ENCODE measurements at regions of chr2 and their contacts with region 1.

Region 1: GRCh38 chr2:31675485-31675901 is 94.8 kb upstream of the SRD5A2 start:
- DNase-seq: peak; percentile 57
- ATAC-seq: peak; percentile 96
- H3K4me3 Mint-ChIP-seq: no peak overlapping the region
- H3K27ac Mint-ChIP-seq: no peak overlapping the region
- H3K4me1 Mint-ChIP-seq: peaks cover 7% of the 10 kb centered on the region
- H3K27me3 Mint-ChIP-seq: peaks cover 6% of the 10 kb centered on the region; the same call in 1 of the 2 replicates
- CTCF ChIP-seq: no peak

Region 2: GRCh38 chr2:31694444-31694843 is 19.0 kb after region 1 on chr2:
- CTCF ChIA-PET with region 1: no interaction called
- POLR2A ChIA-PET with region 1: no interaction called
- DNase-seq: no peak
- ATAC-seq: peak; percentile 32; the same call in 1 of the 2 replicates
- H3K4me3 Mint-ChIP-seq: no peak overlapping the region
- H3K27ac Mint-ChIP-seq: no peak overlapping the region
- H3K4me1 Mint-ChIP-seq: no peaks in the 10 kb centered on the region
- H3K27me3 Mint-ChIP-seq: peaks cover 13% of the 10 kb centered on the region
- CTCF ChIP-seq: no peak

Region 3: DNA sequence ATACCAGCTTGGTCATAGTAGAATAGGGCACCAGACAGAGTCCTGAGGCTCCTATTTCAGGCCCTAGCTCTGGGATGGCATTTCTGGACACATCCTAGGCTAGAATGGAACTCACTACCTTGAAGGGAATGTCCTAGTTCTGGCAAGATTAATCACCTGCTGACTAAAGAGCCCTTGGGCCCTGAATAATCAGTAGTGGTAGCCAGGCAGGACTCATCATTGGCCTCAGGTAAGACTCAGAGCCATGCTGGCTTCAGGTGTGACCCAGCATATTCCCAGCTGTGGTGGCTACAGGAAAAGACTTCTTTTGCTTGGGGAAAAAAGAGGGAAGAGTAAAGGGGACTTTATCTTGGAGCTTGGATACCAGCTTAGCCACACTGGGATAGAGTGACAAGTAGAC is 36.2 kb after region 1 on chr2:
- CTCF ChIA-PET with region 1: no interaction called
- POLR2A ChIA-PET with region 1: no interaction called
- DNase-seq: no peak
- ATAC-seq: no peak
- H3K4me3 Mint-ChIP-seq: no peak overlapping the region
- H3K27ac Mint-ChIP-seq: no peak overlapping the region
- H3K4me1 Mint-ChIP-seq: no peaks in the 10 kb centered on the region
- H3K27me3 Mint-ChIP-seq: peaks cover 8% of the 10 kb centered on the region
- CTCF ChIP-seq: no peak

Region 4: GRCh38 chr2:31729764-31730092 is 54.2 kb after region 1 on chr2:
- CTCF ChIA-PET with region 1: interaction called, 19 read pairs
- POLR2A ChIA-PET with region 1: no interaction called
- DNase-seq: no peak
- ATAC-seq: peak; percentile 99
- H3K4me3 Mint-ChIP-seq: no peak overlapping the region
- H3K27ac Mint-ChIP-seq: no peak overlapping the region
- H3K4me1 Mint-ChIP-seq: peaks cover 4% of the 10 kb centered on the region
- H3K27me3 Mint-ChIP-seq: no peaks in the 10 kb centered on the region
- CTCF ChIP-seq: no peak

Region 5: DNA sequence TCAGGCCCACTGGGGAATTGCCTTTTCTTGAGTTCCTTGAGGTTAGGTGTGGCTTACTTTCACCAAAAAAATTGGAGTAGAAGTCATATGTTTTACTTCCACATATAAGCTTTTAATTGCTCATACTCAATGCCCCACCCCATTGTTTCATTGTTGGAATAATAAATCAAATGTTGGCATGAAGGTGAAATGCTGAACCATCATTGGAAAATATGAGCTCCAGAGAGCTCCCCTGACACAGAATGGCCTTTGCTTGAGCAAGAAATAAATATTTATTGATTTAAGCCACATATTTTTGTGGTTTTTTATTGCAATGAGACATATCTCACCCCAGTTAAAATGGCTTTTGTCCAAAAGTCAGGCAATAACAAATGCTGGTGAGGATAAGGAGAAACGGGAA is 72.5 kb after region 1 on chr2:
- CTCF ChIA-PET with region 1: no interaction called
- POLR2A ChIA-PET with region 1: no interaction called
- DNase-seq: no peak
- ATAC-seq: no peak
- H3K4me3 Mint-ChIP-seq: no peak overlapping the region
- H3K27ac Mint-ChIP-seq: no peak overlapping the region
- H3K4me1 Mint-ChIP-seq: no peaks in the 10 kb centered on the region
- H3K27me3 Mint-ChIP-seq: peaks cover 6% of the 10 kb centered on the region
- CTCF ChIP-seq: no peak

Region 6: DNA sequence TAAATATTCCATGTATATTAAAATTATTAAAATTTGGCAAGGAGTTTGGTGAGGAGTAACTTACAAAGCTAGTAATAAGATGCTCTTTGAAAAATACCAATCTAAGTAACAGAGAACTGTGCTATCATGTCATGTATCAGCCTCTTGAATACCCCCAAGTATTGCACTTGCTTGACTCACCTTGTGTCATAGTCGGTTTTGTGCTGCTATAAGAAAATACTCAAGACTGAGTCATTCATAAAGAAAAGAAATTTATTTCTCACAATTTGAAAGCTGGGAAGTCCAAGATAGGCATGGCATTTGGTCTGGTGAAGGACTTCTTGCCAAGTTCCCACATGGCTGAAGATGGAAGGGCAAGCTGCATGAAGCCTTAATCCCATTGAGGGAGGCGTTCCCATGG is 156.1 kb after region 1 on chr2:
- CTCF ChIA-PET with region 1: interaction called, 17 read pairs
- POLR2A ChIA-PET with region 1: no interaction called
- DNase-seq: no peak
- ATAC-seq: no peak
- H3K4me3 Mint-ChIP-seq: no peak overlapping the region
- H3K27ac Mint-ChIP-seq: no peak overlapping the region
- H3K4me1 Mint-ChIP-seq: no peaks in the 10 kb centered on the region
- H3K27me3 Mint-ChIP-seq: peaks cover 10% of the 10 kb centered on the region; the same call in 1 of the 2 replicates
- CTCF ChIP-seq: no peak